ENCODE measurements at regions of chr11 and their contacts with region 1.

Region 1: GRCh38 chr11:75525596-75526541 is at the start of gene GDPD5:
- DNase-seq: peak; percentile 72 to 85 (median 82)
- H3K4me3 ChIP-seq: peak within 1 kb of the TSS in 3 of 4 donors; percentile 26 to 76 (median 36)
- H3K27ac ChIP-seq: peak within 1 kb of the TSS in 1 of 5 donors; percentile 74
- H3K4me1 ChIP-seq: peaks cover 13 to 20% of the 10 kb centered on the region in 2 donors
- H3K27me3 ChIP-seq: no peaks in the 10 kb centered on the region
- CTCF ChIP-seq: peak in 3 of 6 experiments; percentile 25 to 54 (median 41)
- POLR2A ChIP-seq: no peak
- total RNA-seq, gene GDPD5: 4.8 to 17.8 (median 13.6) TPM

Region 2: DNA sequence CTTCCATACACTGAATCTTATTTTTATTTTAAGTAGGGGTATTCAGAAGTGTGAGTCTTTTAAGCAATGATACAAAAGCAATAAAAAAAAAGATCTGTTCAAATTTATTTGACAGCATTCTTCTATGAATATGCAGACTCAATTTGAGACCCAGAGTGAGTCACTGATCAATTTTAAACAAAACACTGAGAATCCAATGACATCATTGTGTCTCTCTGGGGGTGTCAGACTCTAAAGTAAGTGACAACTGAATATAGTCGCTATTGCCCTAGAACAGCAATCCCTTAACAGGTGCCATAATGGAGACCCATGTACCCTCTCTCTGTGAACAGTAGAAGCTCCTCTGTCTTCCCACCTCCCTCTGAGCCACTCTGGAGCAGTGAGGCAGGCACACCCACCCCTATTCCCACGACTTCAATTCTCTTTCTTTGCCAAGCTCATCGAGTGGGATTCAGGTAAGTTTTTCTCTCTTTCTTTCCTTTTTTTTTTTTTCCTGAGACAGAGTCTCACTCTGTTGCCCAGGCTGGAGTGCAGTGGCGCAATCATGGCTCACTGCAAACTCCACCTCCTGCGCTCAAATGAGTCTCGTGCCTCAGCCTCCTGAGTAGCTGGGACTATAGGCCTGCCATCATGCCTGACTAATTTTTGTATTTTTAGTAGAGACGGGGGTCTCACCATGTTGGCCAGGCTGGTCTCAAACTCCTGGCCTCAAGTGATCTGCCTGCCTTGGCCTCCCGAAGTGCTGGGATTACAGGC is 131.6 kb before region 1 on chr11:
- intact Hi-C with region 1: loop called in 1 of 2 experiments (anchors 2 kb)
- DNase-seq: no peak
- H3K4me3 ChIP-seq: no peak overlapping the region
- H3K27ac ChIP-seq: no peak overlapping the region
- H3K4me1 ChIP-seq: no peaks in the 10 kb centered on the region
- H3K27me3 ChIP-seq: peaks cover 6% of the 10 kb centered on the region
- CTCF ChIP-seq: no peak
- POLR2A ChIP-seq: no peak

Region 3: GRCh38 chr11:75399344-75400145 is 126.3 kb before region 1 on chr11 and contains the start of gene RPS3:
- intact Hi-C with region 1: loop called (anchors 2 to 10 kb)
- DNase-seq: peak; percentile 89 to 97 (median 94)
- H3K4me3 ChIP-seq: peak within 1 kb of the TSS; percentile 71 to 98 (median 86)
- H3K27ac ChIP-seq: peak within 1 kb of the TSS; percentile 70 to 98 (median 93)
- H3K4me1 ChIP-seq: peaks cover 0 to 29% of the 10 kb centered on the region in 2 donors
- H3K27me3 ChIP-seq: no peaks in the 10 kb centered on the region
- CTCF ChIP-seq: peak in 3 of 6 experiments; percentile 13 to 19 (median 19)
- POLR2A ChIP-seq: peak; percentile 49 to 84
- total RNA-seq, gene RPS3: 776 to 2,024 (median 1,323) TPM

Region 4: GRCh38 chr11:75468534-75469340 is 57.1 kb before region 1 on chr11:
- intact Hi-C with region 1: no loop called
- DNase-seq: peak; percentile 35 to 91 (median 68)
- H3K4me3 ChIP-seq: no peak overlapping the region
- H3K27ac ChIP-seq: peak overlapping the region in 3 of 5 donors; percentile 6 to 84 (median 68)
- H3K4me1 ChIP-seq: peaks cover 7 to 30% of the 10 kb centered on the region in 2 donors
- H3K27me3 ChIP-seq: no peaks in the 10 kb centered on the region
- CTCF ChIP-seq: no peak
- POLR2A ChIP-seq: no peak

Region 5: DNA sequence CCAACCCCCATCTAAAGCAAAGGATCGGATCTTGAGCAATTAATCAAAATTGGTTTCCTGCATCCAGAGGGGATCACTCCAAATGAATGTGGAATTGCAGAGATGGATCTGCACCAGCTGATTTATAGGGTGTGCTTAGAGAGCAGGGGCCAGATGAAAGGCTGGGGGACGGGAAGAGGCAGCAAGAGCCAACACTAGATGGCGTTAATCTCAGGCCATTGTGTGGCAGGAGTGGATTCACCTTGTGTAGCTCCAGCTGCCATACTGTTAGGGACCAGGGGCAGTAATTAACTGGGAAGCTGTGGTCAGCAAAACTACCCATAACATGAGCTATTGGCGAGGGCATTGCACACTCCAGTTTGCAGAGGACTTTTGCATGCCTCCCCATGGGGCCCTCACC is 71.8 kb after region 1 on chr11:
- intact Hi-C with region 1: no loop called
- DNase-seq: peak in 1 of 7 donors; percentile 30
- H3K4me3 ChIP-seq: no peak overlapping the region
- H3K27ac ChIP-seq: no peak overlapping the region
- H3K4me1 ChIP-seq: peaks cover 0 to 6% of the 10 kb centered on the region in 2 donors
- H3K27me3 ChIP-seq: no peaks in the 10 kb centered on the region
- CTCF ChIP-seq: peak in 5 of 6 experiments; percentile 24 to 48 (median 39)
- POLR2A ChIP-seq: no peak

Region 6: DNA sequence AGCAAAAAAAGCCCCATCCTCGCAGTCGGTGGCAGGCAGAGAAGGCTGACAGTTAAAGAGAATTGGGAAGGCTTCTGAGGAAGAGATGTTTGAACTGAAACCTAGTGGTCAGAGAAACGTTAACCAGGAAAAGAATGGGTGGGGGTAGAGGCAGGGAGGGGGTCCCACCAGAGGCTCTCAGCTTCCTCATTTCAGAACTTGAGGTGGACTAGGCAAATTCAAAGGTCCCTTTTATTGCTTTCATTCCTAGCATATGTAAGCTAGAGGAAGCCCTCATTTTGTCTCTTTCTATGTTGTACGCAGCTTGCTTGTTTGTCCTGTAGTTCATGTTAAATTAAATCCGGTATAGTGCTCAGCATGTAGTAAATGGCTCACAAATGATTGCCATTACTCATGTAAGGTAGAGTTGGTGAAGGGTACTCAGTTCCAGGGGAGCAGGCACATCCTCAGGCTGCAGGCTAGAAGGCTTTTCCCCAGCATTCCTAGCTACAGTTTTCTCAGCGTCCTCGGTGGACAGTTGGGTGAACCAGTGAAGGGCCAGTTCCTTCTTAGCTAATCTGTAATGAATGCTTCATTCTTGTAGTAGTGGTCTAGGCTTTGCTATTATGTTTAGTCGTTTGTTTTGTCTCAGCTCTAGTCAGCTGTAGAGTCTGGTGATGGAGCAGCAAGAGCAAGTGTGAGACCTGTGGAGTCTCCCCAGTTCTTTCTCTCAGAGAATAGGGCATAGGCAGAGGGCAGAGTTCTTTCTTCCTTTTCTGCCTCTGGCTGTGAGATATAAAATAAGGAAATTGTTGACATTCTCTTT is 347.8 kb after region 1 on chr11:
- intact Hi-C with region 1: no loop called
- DNase-seq: no peak
- H3K4me3 ChIP-seq: no peak overlapping the region
- H3K27ac ChIP-seq: no peak overlapping the region
- H3K4me1 ChIP-seq: peaks cover 7 to 19% of the 10 kb centered on the region in 2 donors
- H3K27me3 ChIP-seq: no peaks in the 10 kb centered on the region
- CTCF ChIP-seq: no peak
- POLR2A ChIP-seq: no peak